Thyroid gland (tissue), 4 donors: ENCODE measurements at regions of chr1 and their contacts with region 1.

Region 1: GRCh38 chr1:116485071-116485735 is 85.6 kb downstream of the CD58 start:
- DNase-seq: peak; percentile 87 to 92
- H3K4me3 ChIP-seq: no peak overlapping the region
- H3K27ac ChIP-seq: no peak overlapping the region
- H3K4me1 ChIP-seq: peaks cover 7 to 28% of the 10 kb centered on the region in 2 donors
- H3K27me3 ChIP-seq: no peaks in the 10 kb centered on the region
- CTCF ChIP-seq: peak; percentile 77 to 94 (median 91)
- POLR2A ChIP-seq: no peak

Region 2: DNA sequence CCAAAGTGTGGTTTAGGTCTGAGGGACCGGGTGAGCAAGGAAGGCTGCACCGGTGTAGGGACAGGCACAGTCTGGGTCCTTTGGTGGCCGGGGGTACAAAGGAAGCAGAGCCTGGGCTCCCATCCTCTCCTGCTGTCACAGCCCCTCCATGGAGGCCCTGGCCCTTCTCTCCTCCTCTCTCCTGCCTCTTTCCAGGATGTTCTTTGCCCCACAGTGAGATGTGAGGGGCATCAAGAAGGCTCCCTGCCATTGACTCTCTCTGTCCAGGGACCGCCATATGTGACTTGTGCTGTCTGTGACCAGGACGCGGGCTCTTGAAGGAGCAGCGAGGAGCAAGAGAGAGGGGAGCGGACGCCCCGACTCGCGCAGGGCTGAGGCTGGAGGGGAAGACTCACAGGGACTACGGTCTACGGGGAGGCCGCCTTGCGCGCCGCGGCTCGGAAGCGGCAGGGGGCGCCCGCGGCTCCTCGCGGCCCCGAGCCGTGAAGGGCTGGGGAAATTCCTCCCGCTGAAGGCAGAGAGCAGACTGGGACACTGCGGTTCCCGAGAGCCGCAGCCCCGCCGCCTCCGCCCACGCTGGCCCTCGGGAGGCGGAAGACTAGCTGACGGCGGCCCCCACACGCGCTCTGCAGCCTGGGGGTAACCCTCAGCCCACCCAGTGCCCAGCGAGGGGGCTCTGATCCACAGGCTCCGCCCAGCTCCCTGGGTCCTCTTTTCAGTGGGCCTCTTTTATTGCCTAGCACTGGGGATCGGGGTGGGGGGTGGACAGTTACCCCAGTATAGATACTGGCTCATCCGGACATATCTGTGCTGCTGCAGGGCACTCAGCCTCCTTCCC is 333.2 kb before region 1 on chr1:
- intact Hi-C with region 1: loop called (anchors 5 kb)
- DNase-seq: peak; percentile 76 to 78
- H3K4me3 ChIP-seq: no peak overlapping the region
- H3K27ac ChIP-seq: peak overlapping the region in 2 of 3 donors; percentile 58 to 74
- H3K4me1 ChIP-seq: peaks cover 4 to 8% of the 10 kb centered on the region in 2 donors
- H3K27me3 ChIP-seq: no peaks in the 10 kb centered on the region
- CTCF ChIP-seq: peak; percentile 67 to 96 (median 86)
- POLR2A ChIP-seq: peak in 1 of 2 donors; percentile 21

Region 3: GRCh38 chr1:116226017-116226416 is 259.2 kb before region 1 on chr1:
- intact Hi-C with region 1: loop called (anchors 5 kb)
- DNase-seq: no peak
- H3K4me3 ChIP-seq: no peak overlapping the region
- H3K27ac ChIP-seq: no peak overlapping the region
- H3K4me1 ChIP-seq: peaks cover 0 to 5% of the 10 kb centered on the region in 2 donors
- H3K27me3 ChIP-seq: no peaks in the 10 kb centered on the region
- CTCF ChIP-seq: no peak
- POLR2A ChIP-seq: no peak

Region 4: DNA sequence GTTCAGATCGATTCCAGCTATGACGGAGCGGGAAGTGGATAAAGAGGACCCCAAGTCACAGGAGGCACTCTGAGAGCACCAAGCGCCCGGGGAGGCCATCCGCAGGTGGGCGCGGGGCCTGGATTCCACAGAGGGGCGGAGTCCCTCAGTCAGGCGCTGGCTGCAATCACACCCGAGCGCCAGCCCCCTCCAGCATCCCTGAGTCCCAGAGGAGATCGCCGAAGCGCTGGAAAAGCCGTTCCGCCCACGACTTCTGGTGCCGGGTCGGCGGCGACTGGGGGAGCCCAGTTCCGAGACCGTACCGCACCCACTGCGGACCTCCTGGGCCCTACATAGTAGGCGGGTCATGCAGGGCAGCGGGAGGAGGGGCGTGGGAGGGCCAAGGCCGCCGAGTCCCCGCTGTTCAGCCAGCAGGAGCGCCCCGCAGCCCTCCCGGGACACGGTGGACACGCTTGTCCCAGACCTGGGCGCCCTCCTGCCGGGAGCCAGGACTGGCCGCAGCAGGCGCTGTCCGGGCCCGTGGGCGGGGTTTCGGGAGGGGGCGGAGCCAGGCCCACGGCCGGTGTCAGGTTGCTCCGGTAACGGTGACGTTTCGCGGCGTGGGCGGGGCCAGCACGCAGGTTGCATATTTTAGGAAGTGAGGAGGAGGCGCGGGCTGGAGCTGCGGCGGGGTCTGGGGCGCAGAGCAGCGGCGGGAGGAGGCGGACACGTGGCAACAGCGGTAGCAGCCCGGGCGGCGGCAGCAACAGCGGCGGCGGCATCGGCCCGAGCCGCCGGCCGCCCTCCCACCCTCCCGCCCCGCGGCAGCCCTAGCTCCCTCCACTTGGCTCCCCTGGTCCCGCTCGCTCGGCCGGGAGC is 112.4 kb before region 1 on chr1 and contains the start of gene ATP1A1:
- intact Hi-C with region 1: loop called (anchors 5 kb)
- DNase-seq: peak; percentile 98
- H3K4me3 ChIP-seq: peak within 1 kb of the TSS; percentile 56 to 97 (median 95)
- H3K27ac ChIP-seq: peak within 1 kb of the TSS; percentile 97 to 99 (median 98)
- H3K4me1 ChIP-seq: peaks cover 20% of the 10 kb centered on the region in 2 donors
- H3K27me3 ChIP-seq: no peaks in the 10 kb centered on the region
- CTCF ChIP-seq: peak in 1 of 6 experiments; percentile 24
- POLR2A ChIP-seq: peak; percentile 91 to 100
- total RNA-seq, gene ATP1A1: 770 to 1,450 (median 1,316) TPM